GM12878 (cell line): ENCODE measurements at regions of chr5 and their contacts with region 1.

Region 1: DNA sequence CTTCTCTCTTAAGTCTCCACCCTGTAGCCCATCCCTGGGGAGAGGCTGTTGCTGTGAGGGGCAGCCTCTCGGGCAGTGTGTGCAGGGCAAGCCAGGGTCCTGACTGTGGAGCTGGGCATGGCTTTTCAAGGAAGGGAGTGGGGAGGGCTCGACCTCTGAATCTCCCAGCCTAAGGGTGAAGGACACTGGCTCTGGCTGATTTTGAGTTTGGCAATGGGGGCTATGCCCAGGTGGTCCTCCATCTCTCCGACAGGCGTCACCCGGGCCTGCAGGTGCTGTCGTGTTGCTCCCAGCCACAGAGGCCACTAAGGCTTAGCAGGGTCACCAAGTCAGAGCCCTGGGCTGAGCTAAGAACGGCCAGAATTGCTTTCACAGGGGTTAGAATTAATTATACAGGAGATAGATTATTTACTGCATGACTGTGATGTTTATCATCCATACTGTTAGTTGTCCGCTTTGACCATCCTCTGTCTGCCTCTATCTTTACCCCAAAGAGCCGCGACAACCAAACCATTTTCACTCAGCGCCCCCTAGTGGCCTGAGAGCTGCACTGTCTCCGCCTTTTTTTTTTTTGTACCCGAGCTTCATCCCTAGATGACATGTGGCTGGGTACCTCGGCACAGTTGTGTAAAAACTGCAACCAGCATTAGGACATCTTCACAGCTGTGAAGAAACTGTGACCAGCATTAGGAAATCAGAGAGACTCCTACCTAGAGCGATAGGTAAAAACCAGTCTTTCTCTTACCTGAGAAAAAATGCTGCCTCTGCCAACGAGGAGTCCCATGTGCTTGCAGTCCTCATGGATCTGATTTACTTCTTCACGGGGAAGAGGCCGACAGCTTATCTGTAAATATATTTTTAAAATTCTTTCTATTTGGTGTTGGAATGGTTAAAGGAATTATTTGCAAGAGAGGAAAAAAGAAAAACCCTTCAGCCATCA is 44.5 kb downstream of the AGXT2 start:
- DNase-seq: peak; percentile 9
- ATAC-seq: peak; percentile 91
- H3K4me3 ChIP-seq: no peak overlapping the region
- H3K27ac ChIP-seq: no peak overlapping the region
- H3K4me1 ChIP-seq: 0 out of 2 replicates have a peak, but pooled peaks cover 5% of the 10 kb centered on the region
- H3K27me3 ChIP-seq: no peaks in the 10 kb centered on the region
- CTCF ChIP-seq: peak; percentile 84 to 93 (median 91); a peak in 5 of 6 replicates
- EP300 ChIP-seq: no peak
- POLR2A ChIP-seq: no peak
- RAD21 ChIP-seq: peak; percentile 91

Region 2: GRCh38 chr5:34522599-34523386 is 480.5 kb before region 1 on chr5:
- CTCF ChIA-PET with region 1: interaction called, 10 read pairs
- POLR2A ChIA-PET with region 1: no interaction called
- RAD21 ChIA-PET with region 1: interaction called, 3 read pairs
- SMC1A ChIA-PET with region 1: interaction called, 11 read pairs
- in situ Hi-C with region 1: no loop called
- intact Hi-C with region 1: loop called (anchors 5 kb)
- DNase-seq: no peak
- ATAC-seq: peak; percentile 98
- H3K4me3 ChIP-seq: no peak overlapping the region
- H3K27ac ChIP-seq: no peak overlapping the region
- H3K4me1 ChIP-seq: no peaks in the 10 kb centered on the region
- H3K27me3 ChIP-seq: no peaks in the 10 kb centered on the region
- CTCF ChIP-seq: peak; percentile 65 to 78 (median 72); a peak in 5 of 6 replicates
- EP300 ChIP-seq: no peak
- POLR2A ChIP-seq: no peak
- RAD21 ChIP-seq: peak; percentile 87

Region 3: DNA sequence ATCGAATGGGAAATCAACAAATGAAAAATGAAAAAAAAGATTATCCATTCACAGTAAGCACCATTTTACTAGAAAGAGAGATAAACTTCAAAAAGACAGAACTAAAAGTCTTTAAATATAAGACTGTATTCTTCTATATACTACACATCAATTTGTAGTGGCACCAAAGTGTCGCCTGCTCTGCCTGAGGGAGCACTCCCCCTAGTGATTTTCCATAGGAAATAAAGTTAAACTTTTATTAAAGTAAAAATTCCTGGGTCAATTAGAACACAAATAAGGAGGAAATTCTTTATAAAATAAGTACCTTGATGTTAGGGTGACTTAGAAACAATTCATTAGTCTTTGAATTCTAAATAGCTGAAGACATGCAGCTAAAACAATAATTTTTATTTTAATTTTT is 97.7 kb before region 1 on chr5:
- CTCF ChIA-PET with region 1: interaction called, 11 read pairs
- POLR2A ChIA-PET with region 1: no interaction called
- RAD21 ChIA-PET with region 1: no interaction called
- SMC1A ChIA-PET with region 1: interaction called, 5 read pairs
- in situ Hi-C with region 1: no loop called
- intact Hi-C with region 1: no loop called
- DNase-seq: no peak
- ATAC-seq: no peak
- H3K4me3 ChIP-seq: no peak overlapping the region
- H3K27ac ChIP-seq: no peak overlapping the region
- H3K4me1 ChIP-seq: no peaks in the 10 kb centered on the region
- H3K27me3 ChIP-seq: no peaks in the 10 kb centered on the region
- CTCF ChIP-seq: no peak; a peak in 1 of 6 replicates
- EP300 ChIP-seq: no peak
- POLR2A ChIP-seq: no peak
- RAD21 ChIP-seq: no peak

Region 4: DNA sequence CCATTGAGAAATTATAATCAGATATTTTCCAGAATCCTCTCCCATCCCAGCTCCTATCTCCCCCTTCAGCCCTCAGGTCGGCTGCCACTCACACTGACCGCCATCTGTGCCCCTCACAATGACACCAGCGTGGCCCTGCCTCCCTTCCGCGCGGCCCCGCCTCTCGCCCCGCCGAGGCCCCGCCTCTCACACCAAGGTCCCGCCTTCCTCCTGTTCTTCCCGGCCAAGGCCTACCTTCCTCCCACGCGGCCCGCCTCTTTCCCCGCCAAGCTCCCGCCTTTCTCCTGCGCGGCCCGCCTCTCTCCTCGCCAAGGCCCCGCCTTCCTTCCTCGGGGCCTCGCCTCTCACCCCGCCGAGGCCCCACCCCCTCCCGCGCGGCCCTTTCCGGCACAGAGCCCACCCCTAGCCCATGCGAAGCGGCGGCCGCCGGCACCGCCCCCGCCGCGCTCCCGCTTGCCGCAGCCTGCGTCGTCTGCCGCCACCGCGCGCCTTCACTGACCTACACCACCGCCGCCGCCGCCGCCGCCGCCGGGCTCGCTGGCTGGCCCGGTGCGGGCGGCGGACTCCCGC is 74.1 kb before region 1 on chr5 and contains the start of gene DNAJC21:
- CTCF ChIA-PET with region 1: interaction called, 11 read pairs
- POLR2A ChIA-PET with region 1: no interaction called
- RAD21 ChIA-PET with region 1: interaction called, 14 read pairs
- SMC1A ChIA-PET with region 1: interaction called, 4 read pairs
- in situ Hi-C with region 1: no loop called
- intact Hi-C with region 1: no loop called
- DNase-seq: peak; percentile 88
- ATAC-seq: peak; percentile 92
- H3K4me3 ChIP-seq: peak within 1 kb of the TSS; percentile 83
- H3K27ac ChIP-seq: peak within 1 kb of the TSS; percentile 86
- H3K4me1 ChIP-seq: no peaks in the 10 kb centered on the region
- H3K27me3 ChIP-seq: no peaks in the 10 kb centered on the region
- CTCF ChIP-seq: no peak
- EP300 ChIP-seq: no peak
- POLR2A ChIP-seq: peak; percentile 78
- RAD21 ChIP-seq: no peak
- polyA plus RNA-seq, gene DNAJC21: 14.6 to 22.0 TPM

Region 5: DNA sequence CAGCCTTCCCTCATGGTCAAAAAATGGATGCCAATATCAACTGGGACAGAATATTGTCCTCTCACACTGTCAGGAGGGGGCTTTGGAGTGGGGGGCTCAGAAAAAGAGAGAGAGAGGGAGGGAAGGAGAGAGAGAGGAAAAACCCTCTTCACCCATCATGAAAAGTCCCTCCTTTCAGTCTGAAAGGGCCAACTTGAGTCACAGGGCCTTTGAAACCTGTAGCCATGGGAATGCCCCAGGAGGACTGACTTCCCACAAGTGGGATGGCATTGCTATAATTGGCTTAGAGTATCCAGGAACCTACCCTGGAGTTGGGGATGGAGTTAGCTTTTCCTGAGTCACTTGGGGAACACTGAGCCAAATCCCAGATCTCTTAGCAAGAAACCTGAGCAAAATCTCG is 32.7 kb before region 1 on chr5:
- CTCF ChIA-PET with region 1: interaction called, 13 read pairs
- POLR2A ChIA-PET with region 1: no interaction called
- RAD21 ChIA-PET with region 1: interaction called, 4 read pairs
- SMC1A ChIA-PET with region 1: interaction called, 25 read pairs
- in situ Hi-C with region 1: no loop called
- intact Hi-C with region 1: no loop called
- DNase-seq: no peak
- ATAC-seq: peak; percentile 74
- H3K4me3 ChIP-seq: no peak overlapping the region
- H3K27ac ChIP-seq: no peak overlapping the region
- H3K4me1 ChIP-seq: no peaks in the 10 kb centered on the region
- H3K27me3 ChIP-seq: no peaks in the 10 kb centered on the region
- CTCF ChIP-seq: no peak
- EP300 ChIP-seq: no peak
- POLR2A ChIP-seq: no peak
- RAD21 ChIP-seq: no peak

Region 6: GRCh38 chr5:34991486-34992238 is 11.6 kb before region 1 on chr5:
- CTCF ChIA-PET with region 1: interaction called, 12 read pairs
- POLR2A ChIA-PET with region 1: no interaction called
- RAD21 ChIA-PET with region 1: no interaction called
- SMC1A ChIA-PET with region 1: interaction called, 4 read pairs
- in situ Hi-C with region 1: no loop called
- intact Hi-C with region 1: no loop called
- DNase-seq: no peak
- ATAC-seq: no peak
- H3K4me3 ChIP-seq: no peak overlapping the region
- H3K27ac ChIP-seq: no peak overlapping the region
- H3K4me1 ChIP-seq: no peaks in the 10 kb centered on the region
- H3K27me3 ChIP-seq: no peaks in the 10 kb centered on the region; a peak in 1 of 4 replicates
- CTCF ChIP-seq: no peak
- EP300 ChIP-seq: no peak
- POLR2A ChIP-seq: no peak
- RAD21 ChIP-seq: no peak